ENCODE measurements at regions of chr6 and their contacts with region 1.

Region 1: GRCh38 chr6:11172501-11173332 is 59.8 kb downstream of the NEDD9 start:
- DNase-seq: peak in 8 of 10 donors; percentile 36 to 93 (median 72)

Region 2: GRCh38 chr6:11232193-11232769 is 59.6 kb after region 1 on chr6 and contains the start of gene NEDD9:
- intact Hi-C with region 1: loop called (anchors 5 kb)
- DNase-seq: peak; percentile 81 to 99 (median 92)

Region 3: GRCh38 chr6:11428895-11429294 is 256.2 kb after region 1 on chr6:
- intact Hi-C with region 1: no loop called
- DNase-seq: no peak